ENCODE measurements at regions of chr1 and their contacts with region 1.

Region 1: GRCh38 chr1:202348509-202349205 is at the start of gene PPP1R12B:
- DNase-seq: peak; percentile 98 to 99 (median 99)
- ATAC-seq: peak; percentile 97
- H3K4me3 ChIP-seq: peak within 1 kb of the TSS; percentile 99
- H3K27ac ChIP-seq: peak within 1 kb of the TSS; percentile 85 to 91
- H3K4me1 ChIP-seq: peaks cover 0 to 41% of the 10 kb centered on the region in 2 donors
- H3K27me3 ChIP-seq: no peaks in the 10 kb centered on the region
- CTCF ChIP-seq: no peak
- polyA plus RNA-seq, gene PPP1R12B: 25.8 to 34.2 (median 30.5) TPM

Region 2: DNA sequence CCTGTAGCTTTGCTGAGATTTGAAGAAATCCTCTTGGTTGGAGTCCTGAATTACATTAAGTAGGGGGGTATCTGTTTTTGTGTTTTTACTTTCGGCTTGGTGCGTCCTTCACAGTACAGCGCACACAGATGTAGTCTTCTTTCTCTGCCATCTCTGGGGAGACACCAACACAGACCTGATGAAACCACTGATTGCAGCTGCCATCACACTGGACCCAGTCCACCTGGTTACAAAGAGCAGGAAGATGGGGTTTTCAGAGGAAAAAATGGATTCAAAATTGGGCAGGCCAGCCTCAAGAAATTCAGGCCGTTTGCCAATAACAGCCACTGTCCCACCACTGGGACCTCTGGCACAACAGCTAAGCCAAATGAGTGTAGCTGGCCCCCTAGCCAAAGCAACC is 380.3 kb after region 1 on chr1:
- intact Hi-C with region 1: loop called in 1 of 2 experiments (anchors 10 kb)
- DNase-seq: no peak
- ATAC-seq: no peak
- H3K4me3 ChIP-seq: no peak overlapping the region
- H3K27ac ChIP-seq: no peak overlapping the region
- H3K4me1 ChIP-seq: no peaks in the 10 kb centered on the region
- H3K27me3 ChIP-seq: no peaks in the 10 kb centered on the region
- CTCF ChIP-seq: no peak